SK-N-SH (cell line): ENCODE measurements at regions of chr16 and their contacts with region 1.

Region 1: DNA sequence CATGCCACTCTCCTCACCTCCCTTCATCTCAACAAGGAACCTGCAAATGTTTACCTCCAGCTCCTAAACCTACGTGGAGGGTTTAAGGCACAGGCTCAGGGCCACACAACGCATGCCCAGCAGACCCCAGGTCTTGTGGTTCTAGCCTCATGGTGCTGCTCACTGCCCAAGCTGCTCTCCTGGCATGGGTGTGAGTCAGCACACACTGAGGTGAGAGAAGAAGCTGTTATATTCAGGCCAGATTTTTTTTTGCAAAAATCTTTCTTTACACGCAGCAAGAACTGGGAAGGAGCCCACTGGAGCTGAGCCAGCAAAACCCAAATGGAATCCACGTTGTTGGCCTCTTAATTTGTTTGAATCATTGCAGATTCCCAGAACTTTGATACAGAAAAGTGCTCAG is 5.5 kb upstream of the C16orf96 start:
- DNase-seq: no peak
- H3K4me3 ChIP-seq: no peak overlapping the region
- H3K27ac ChIP-seq: no peak overlapping the region
- H3K4me1 ChIP-seq: no peaks in the 10 kb centered on the region; a peak in 1 of 4 replicates
- H3K27me3 ChIP-seq: no peaks in the 10 kb centered on the region; the same call in 1 of the 2 replicates
- CTCF ChIP-seq: no peak
- EP300 ChIP-seq: no peak
- RAD21 ChIP-seq: no peak

Region 2: GRCh38 chr16:4293822-4294457 is 256.7 kb before region 1 on chr16:
- CTCF ChIA-PET with region 1: no interaction called
- POLR2A ChIA-PET with region 1: no interaction called
- DNase-seq: peak; percentile 93
- H3K4me3 ChIP-seq: peak overlapping the region in 1 of 2 experiments; percentile 6; a peak in 2 of 4 replicates
- H3K27ac ChIP-seq: peak overlapping the region; percentile 60 to 87
- H3K4me1 ChIP-seq: peaks cover 10 to 20% of the 10 kb centered on the region in 2 experiments; a peak in 3 of 4 replicates
- H3K27me3 ChIP-seq: no peaks in the 10 kb centered on the region
- CTCF ChIP-seq: no peak
- EP300 ChIP-seq: peak in 1 of 2 experiments; percentile 73; a peak in 3 of 4 replicates
- RAD21 ChIP-seq: peak; percentile 17; the same call in 1 of the 2 replicates

Region 3: DNA sequence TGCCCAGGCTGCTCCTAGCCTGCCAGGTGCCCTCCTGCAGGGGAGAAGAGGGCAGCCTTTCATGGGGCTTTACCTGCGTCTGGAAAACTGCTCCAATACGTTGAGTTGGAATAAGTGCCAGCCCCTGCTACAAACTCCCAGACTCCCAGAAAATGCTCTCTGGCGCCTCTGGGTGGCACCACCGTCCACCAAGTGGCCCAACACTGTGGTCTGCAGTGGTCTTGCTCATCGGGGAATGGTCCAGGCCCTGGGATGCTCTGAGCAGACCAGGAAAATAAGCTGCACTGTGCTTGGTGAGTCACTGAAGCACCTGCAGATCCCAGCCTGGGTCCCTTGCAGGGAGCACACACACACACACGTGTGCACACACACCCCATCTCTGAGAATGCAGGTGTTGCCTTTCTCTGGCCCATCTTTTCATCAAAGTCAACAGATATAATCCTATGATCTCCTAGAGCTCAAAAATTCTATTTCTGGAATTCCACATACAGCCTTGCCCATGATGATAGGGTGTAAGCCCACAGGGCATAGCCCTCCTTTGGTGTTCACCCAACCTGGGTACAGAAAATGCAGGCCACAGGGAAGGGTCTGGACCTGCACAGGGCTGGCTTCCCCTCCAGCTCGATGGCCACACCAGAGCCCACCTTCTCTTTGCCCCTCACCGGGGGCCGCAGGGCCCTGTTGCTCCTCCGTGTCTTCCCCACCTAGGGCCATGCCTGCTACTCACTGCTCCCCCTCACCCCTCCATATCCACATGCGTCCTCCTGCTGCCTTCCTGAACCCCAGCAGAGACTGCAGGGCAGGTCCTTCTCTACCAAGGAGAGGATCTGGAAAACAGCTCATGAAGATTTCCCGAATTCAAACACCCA is 32.5 kb before region 1 on chr16:
- CTCF ChIA-PET with region 1: interaction called, 182 read pairs
- POLR2A ChIA-PET with region 1: no interaction called
- DNase-seq: peak; percentile 77
- H3K4me3 ChIP-seq: no peak overlapping the region; a peak in 1 of 4 replicates
- H3K27ac ChIP-seq: no peak overlapping the region
- H3K4me1 ChIP-seq: peaks cover 0 to 14% of the 10 kb centered on the region in 2 experiments; a peak in 1 of 4 replicates
- H3K27me3 ChIP-seq: no peaks in the 10 kb centered on the region
- CTCF ChIP-seq: peak; percentile 56
- EP300 ChIP-seq: no peak
- RAD21 ChIP-seq: peak; percentile 77

Region 4: DNA sequence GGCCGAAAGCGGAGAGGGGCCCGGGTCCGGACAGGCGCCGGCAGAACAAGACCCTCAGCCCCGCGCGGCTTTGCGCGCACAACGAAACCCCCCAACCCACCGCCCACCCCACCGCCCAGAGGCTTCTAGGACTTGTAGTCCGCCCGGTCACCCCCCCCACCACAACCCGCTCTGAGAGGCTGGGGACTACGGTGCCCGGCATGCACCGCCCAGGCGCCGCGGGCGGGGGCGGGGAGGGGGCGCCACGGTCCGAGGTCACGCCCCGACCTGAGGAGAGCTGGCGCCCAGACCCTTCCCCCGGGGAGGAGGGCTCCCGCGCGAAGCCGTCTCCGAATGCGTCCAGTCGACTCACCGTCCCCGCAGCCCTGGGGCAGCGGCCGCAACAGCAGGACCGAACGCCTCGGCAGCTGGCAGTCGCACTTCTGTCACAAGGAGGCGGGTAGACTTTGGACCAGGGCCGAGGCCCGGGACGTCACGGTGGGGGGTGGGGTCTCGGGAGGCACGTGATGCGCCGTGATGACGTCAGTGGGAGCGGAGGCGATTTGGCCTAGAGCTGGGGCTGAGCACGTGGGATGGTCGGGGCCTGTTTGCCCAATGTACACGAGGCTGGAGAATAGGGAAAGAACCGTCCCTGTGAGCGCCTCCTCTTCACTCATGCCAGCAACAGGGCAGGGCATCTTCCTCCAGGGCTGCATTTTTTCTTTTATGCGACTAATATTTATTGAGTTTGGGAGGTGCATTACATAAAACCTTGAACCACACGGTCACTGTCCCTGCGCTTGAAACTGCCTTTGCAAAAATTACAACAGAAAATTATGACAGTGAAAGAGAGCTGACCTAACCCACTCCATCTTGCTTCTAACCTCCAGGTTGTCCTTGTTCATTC is 12.0 kb before region 1 on chr16 and contains the start of gene CDIP1:
- CTCF ChIA-PET with region 1: interaction called, 14 read pairs
- POLR2A ChIA-PET with region 1: interaction called, 8 read pairs
- DNase-seq: peak; percentile 97
- H3K4me3 ChIP-seq: peak within 1 kb of the TSS; percentile 66 to 78
- H3K27ac ChIP-seq: peak within 1 kb of the TSS; percentile 66 to 84; a peak in 3 of 4 replicates
- H3K4me1 ChIP-seq: peaks cover 0 to 9% of the 10 kb centered on the region in 2 experiments; a peak in 2 of 4 replicates
- H3K27me3 ChIP-seq: no peaks in the 10 kb centered on the region
- CTCF ChIP-seq: no peak
- EP300 ChIP-seq: no peak
- RAD21 ChIP-seq: no peak
- polyA plus RNA-seq, gene CDIP1: 19.4 and 30.2 TPM in 2 replicates

Region 5: DNA sequence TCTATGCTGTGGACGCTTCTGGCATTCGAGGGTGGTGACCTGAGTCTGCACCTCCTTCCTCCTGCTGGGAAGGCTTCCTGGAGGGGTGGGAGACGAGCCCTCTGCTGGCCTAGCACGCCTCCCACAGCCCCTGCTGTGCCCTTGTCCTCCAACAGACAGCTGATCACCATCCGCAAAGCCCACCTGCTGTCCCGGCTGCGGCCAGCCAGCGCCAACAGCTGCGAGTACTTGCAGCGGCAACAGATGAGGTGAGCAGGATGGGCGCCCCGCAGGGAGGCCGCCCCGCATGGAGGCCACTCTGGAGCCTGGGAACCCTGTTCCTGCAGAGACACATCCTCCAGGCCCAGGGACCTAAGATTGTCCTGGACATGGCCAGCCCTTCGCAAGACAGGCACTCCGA is 42.5 kb after region 1 on chr16:
- CTCF ChIA-PET with region 1: no interaction called
- POLR2A ChIA-PET with region 1: no interaction called
- DNase-seq: peak; percentile 22
- H3K4me3 ChIP-seq: no peak overlapping the region
- H3K27ac ChIP-seq: no peak overlapping the region
- H3K4me1 ChIP-seq: no peaks in the 10 kb centered on the region; a peak in 1 of 4 replicates
- H3K27me3 ChIP-seq: no peaks in the 10 kb centered on the region
- CTCF ChIP-seq: no peak
- EP300 ChIP-seq: no peak
- RAD21 ChIP-seq: no peak